AG04450 (cell line): ENCODE measurements at regions of chr10 and their contacts with region 1.

Region 1: GRCh38 chr10:96850825-96851224 is 18.7 kb downstream of the LCOR start:
- DNase-seq: peak; percentile 89
- H3K4me3 ChIP-seq: no peak overlapping the region; the same call in 1 of the 2 replicates
- H3K27ac ChIP-seq: peak overlapping the region; percentile 96
- H3K27me3 ChIP-seq: no peaks in the 10 kb centered on the region
- CTCF ChIP-seq: no peak

Region 2: GRCh38 chr10:97408496-97408992 is 557.7 kb after region 1 on chr10:
- CTCF ChIA-PET with region 1: interaction called, 12 read pairs
- POLR2A ChIA-PET with region 1: no interaction called
- DNase-seq: no peak
- H3K4me3 ChIP-seq: no peak overlapping the region
- H3K27ac ChIP-seq: no peak overlapping the region
- H3K27me3 ChIP-seq: no peaks in the 10 kb centered on the region
- CTCF ChIP-seq: no peak